ENCODE measurements at regions of chr3 and their contacts with region 1.

Region 1: DNA sequence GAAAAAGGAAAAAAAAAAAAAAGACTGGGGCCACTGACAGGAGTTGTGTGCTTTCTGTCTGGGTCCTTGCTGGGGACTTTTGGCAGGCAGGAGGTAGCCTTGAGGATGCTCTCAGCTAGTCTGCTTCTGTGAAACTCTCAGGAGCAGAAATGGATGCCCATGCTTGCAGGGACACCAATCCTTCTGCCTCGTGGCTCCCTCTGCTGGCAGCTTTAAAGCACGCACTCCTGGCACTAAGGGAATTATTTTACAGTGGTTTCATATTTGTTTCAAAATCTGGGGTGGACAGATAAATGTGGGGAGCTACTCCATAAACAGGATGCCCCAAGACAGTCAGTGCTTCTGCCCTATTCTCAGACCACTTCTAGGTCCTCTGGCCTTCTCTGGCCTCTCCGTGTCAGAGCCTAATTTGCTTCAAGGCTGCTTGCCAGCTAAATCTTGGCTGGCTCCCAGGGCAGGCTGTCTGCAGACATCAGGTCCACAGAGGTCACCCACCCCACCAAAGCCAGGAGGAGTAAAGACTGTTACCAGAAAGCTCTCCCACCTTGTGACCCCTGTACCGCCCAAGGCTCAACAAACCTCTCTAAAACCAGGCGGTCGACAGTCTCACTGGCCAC is 17.1 kb downstream of the TRAIP start:
- DNase-seq: peak; percentile 68 to 86 (median 81)
- H3K4me3 ChIP-seq: peak overlapping the region in 5 of 59 donors; percentile 9 to 22 (median 17)
- H3K27ac ChIP-seq: peak overlapping the region in 19 of 59 donors; percentile 8 to 81 (median 51)
- H3K27me3 ChIP-seq: no peaks in the 10 kb centered on the region
- CTCF ChIP-seq: peak; percentile 71 to 97 (median 89)

Region 2: GRCh38 chr3:49703443-49703927 is 135.8 kb before region 1 on chr3:
- intact Hi-C with region 1: loop called (anchors 1 to 5 kb)
- DNase-seq: peak in 8 of 10 donors; percentile 43 to 75 (median 66)
- H3K4me3 ChIP-seq: peak overlapping the region in 7 of 59 donors; percentile 6 to 35 (median 16)
- H3K27ac ChIP-seq: peak overlapping the region in 13 of 59 donors; percentile 15 to 74 (median 41)
- H3K27me3 ChIP-seq: no peaks in the 10 kb centered on the region
- CTCF ChIP-seq: peak in 55 of 56 donors; percentile 57 to 88 (median 78)

Region 3: GRCh38 chr3:49882166-49882565 is 42.9 kb after region 1 on chr3:
- intact Hi-C with region 1: no loop called
- DNase-seq: no peak
- H3K4me3 ChIP-seq: no peak overlapping the region
- H3K27ac ChIP-seq: peak overlapping the region in 2 of 59 donors; percentile 6 to 13
- H3K27me3 ChIP-seq: no peaks in the 10 kb centered on the region
- CTCF ChIP-seq: no peak